Psoas muscle (tissue), 8 donors: ENCODE measurements at regions of chr1 and their contacts with region 1.

Region 1: DNA sequence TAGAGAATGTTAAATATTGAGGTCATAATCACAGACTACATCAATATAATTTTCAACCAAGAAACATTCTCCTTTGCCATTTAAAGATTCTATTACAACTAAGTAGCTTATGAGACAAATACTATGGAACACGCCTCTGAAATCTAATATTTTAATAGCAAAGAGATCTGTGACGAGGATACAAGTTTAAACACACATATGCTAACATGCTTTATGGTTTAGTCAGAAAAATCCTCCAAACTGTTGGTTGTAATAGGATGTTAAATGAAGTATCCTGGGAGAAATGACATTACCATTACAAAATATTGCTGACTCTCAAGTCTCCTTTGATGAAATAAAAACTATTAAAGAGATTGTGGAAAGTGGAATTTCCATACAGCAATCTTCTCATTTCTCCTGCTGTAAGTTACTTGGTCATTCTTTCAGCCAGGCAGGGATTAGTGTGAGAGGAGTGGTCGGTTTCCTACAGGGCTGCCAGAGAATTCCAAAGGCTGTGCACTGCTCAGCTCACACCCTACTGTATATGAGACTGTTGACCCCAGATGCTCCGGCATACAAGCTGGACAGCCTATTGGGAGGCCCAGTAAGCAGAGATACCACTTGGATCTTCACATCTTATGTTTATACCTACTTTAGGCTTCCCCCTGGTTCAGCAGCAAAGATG is 26.6 kb downstream of the SCYL3 start:
- DNase-seq: no peak
- ATAC-seq: no peak
- H3K4me3 ChIP-seq: no peak overlapping the region
- H3K27ac ChIP-seq: no peak overlapping the region
- H3K4me1 ChIP-seq: no peaks in the 10 kb centered on the region
- H3K27me3 ChIP-seq: no peaks in the 10 kb centered on the region
- CTCF ChIP-seq: no peak

Region 2: GRCh38 chr1:169824153-169824552 is 43.0 kb before region 1 on chr1:
- intact Hi-C with region 1: loop called in 1 of 2 experiments (anchors 5 kb)
- DNase-seq: no peak
- ATAC-seq: no peak
- H3K4me3 ChIP-seq: no peak overlapping the region
- H3K27ac ChIP-seq: no peak overlapping the region
- H3K4me1 ChIP-seq: no peaks in the 10 kb centered on the region
- H3K27me3 ChIP-seq: no peaks in the 10 kb centered on the region
- CTCF ChIP-seq: no peak